ENCODE measurements at regions of chr11 and their contacts with region 1.

Region 1: GRCh38 chr11:47152953-47153950 is 23.4 kb downstream of the ARFGAP2 start:
- H3K4me3 Mint-ChIP-seq: no peak overlapping the region
- H3K27ac Mint-ChIP-seq: no peak overlapping the region
- H3K4me1 Mint-ChIP-seq: peaks cover 18% of the 10 kb centered on the region
- H3K27me3 Mint-ChIP-seq: peaks cover 14% of the 10 kb centered on the region

Region 2: GRCh38 chr11:46889689-46890475 is 263.4 kb before region 1 on chr11:
- intact Hi-C with region 1: loop called (anchors 1 kb)
- H3K4me3 Mint-ChIP-seq: no peak overlapping the region
- H3K27ac Mint-ChIP-seq: no peak overlapping the region
- H3K4me1 Mint-ChIP-seq: no peaks in the 10 kb centered on the region
- H3K27me3 Mint-ChIP-seq: peaks cover 3% of the 10 kb centered on the region

Region 3: DNA sequence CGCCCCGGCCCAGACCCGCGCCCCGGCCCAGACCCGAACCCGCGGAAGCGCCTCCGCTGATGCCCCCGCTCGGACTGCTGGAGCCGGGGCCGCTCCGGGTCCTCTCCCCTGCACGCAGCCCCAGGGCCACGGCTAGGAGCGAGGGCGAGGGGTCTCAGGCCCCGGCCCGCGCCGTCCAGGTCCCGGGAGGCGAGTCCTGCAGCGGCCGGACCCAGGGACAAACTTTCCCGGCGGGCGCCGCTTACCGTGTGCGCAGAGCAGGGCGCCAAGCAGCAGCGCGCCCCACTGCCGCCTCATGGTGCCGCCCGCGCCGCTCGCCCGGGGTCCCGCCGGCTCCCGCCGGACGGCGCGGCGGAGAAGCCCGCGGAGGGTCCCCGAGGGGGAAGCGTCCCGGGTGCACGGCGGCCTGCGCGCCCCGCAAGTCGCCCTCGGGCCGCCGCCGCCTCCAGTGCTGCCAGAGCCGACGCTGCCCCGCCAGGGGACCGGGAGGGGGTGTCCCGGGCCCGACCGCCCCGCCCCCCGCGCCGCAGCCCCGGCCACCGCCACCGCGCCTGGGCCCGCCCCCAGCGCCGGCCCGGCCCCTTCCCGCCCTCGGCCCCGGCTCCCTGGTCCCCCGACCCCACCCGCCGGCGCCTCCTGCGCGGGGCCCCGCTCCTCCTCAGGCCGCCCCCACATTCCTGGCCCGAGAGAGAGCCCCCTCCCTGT is 235.0 kb before region 1 on chr11 and contains the start of gene LRP4:
- intact Hi-C with region 1: loop called (anchors 2 kb)
- H3K4me3 Mint-ChIP-seq: peak within 1 kb of the TSS; percentile 72
- H3K27ac Mint-ChIP-seq: no peak within 1 kb of the TSS
- H3K4me1 Mint-ChIP-seq: peaks cover 30% of the 10 kb centered on the region
- H3K27me3 Mint-ChIP-seq: peaks cover 64% of the 10 kb centered on the region

Region 4: GRCh38 chr11:47130543-47130942 is 22.7 kb before region 1 on chr11:
- intact Hi-C with region 1: no loop called
- H3K4me3 Mint-ChIP-seq: no peak overlapping the region
- H3K27ac Mint-ChIP-seq: no peak overlapping the region
- H3K4me1 Mint-ChIP-seq: no peaks in the 10 kb centered on the region
- H3K27me3 Mint-ChIP-seq: no peaks in the 10 kb centered on the region

Region 5: GRCh38 chr11:47189100-47189834 is 36.0 kb after region 1 on chr11:
- intact Hi-C with region 1: no loop called
- H3K4me3 Mint-ChIP-seq: no peak overlapping the region
- H3K27ac Mint-ChIP-seq: no peak overlapping the region
- H3K4me1 Mint-ChIP-seq: peaks cover 17% of the 10 kb centered on the region
- H3K27me3 Mint-ChIP-seq: peaks cover 72% of the 10 kb centered on the region